ENCODE measurements at regions of chr4 and their contacts with region 1.

Region 1: DNA sequence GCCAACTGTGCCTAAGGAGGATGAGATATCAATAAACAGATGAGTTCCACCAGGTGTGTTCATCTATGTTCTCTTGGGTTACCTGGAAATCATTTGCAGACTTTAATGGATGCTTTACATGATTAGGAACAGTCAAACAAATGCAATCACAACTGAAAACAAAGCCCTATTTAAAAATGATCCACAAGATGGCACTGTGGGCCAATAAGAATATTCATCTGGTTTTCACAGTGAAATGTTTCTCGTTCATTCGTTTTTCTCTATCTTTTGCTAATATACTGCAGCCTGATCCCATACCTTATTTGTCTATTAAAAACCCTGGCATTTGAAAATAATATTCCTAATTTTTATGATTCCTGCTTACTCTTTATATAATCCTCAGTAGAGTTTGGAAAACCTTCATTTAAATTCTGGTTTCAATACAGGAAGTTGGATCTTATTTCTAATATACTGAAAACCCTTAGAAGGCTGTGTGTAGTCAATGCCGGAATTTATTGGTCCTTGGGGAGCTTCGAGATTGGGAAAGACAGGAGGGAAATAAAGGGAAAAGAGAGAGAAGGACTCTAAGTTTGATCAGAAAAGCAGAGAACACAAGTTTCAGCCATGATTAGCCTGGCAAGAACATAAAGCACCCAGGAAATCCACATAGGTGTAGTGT is 63.8 kb upstream of the TAPT1 start:
- DNase-seq: peak; percentile 7
- ATAC-seq: no peak
- H3K4me3 ChIP-seq: no peak overlapping the region
- H3K27ac ChIP-seq: no peak overlapping the region
- H3K4me1 ChIP-seq: no peaks in the 10 kb centered on the region
- H3K27me3 ChIP-seq: no peaks in the 10 kb centered on the region
- CTCF ChIP-seq: peak; percentile 67
- EP300 ChIP-seq: no peak
- POLR2A ChIP-seq: no peak
- RAD21 ChIP-seq: 0 out of 2 replicates have a peak, but pooled peaks have one; percentile 12

Region 2: GRCh38 chr4:16329125-16329796 is 39.2 kb after region 1 on chr4:
- CTCF ChIA-PET with region 1: no interaction called
- POLR2A ChIA-PET with region 1: no interaction called
- in situ Hi-C with region 1: no loop called
- intact Hi-C with region 1: no loop called
- DNase-seq: no peak
- ATAC-seq: no peak
- H3K4me3 ChIP-seq: no peak overlapping the region
- H3K27ac ChIP-seq: no peak overlapping the region
- H3K4me1 ChIP-seq: no peaks in the 10 kb centered on the region
- H3K27me3 ChIP-seq: no peaks in the 10 kb centered on the region
- CTCF ChIP-seq: no peak
- EP300 ChIP-seq: no peak
- POLR2A ChIP-seq: no peak
- RAD21 ChIP-seq: no peak

Region 3: GRCh38 chr4:16443504-16444088 is 153.6 kb after region 1 on chr4:
- CTCF ChIA-PET with region 1: interaction called, 16 read pairs
- POLR2A ChIA-PET with region 1: no interaction called
- in situ Hi-C with region 1: loop called (anchors 5 kb)
- intact Hi-C with region 1: loop called (anchors 1 kb)
- DNase-seq: peak; percentile 30
- ATAC-seq: peak; percentile 68
- H3K4me3 ChIP-seq: no peak overlapping the region
- H3K27ac ChIP-seq: no peak overlapping the region
- H3K4me1 ChIP-seq: no peaks in the 10 kb centered on the region
- H3K27me3 ChIP-seq: no peaks in the 10 kb centered on the region
- CTCF ChIP-seq: peak; percentile 66
- EP300 ChIP-seq: no peak
- POLR2A ChIP-seq: no peak
- RAD21 ChIP-seq: 0 out of 2 replicates have a peak, but pooled peaks have one; percentile 10

Region 4: GRCh38 chr4:16449406-16449805 is 159.4 kb after region 1 on chr4:
- CTCF ChIA-PET with region 1: interaction called, 16 read pairs
- POLR2A ChIA-PET with region 1: no interaction called
- in situ Hi-C with region 1: loop called (anchors 5 kb)
- intact Hi-C with region 1: no loop called
- DNase-seq: no peak
- ATAC-seq: no peak
- H3K4me3 ChIP-seq: no peak overlapping the region
- H3K27ac ChIP-seq: no peak overlapping the region
- H3K4me1 ChIP-seq: peaks cover 5% of the 10 kb centered on the region; the same call in 1 of the 2 replicates
- H3K27me3 ChIP-seq: no peaks in the 10 kb centered on the region
- CTCF ChIP-seq: no peak
- EP300 ChIP-seq: no peak
- POLR2A ChIP-seq: no peak
- RAD21 ChIP-seq: no peak

Region 5: DNA sequence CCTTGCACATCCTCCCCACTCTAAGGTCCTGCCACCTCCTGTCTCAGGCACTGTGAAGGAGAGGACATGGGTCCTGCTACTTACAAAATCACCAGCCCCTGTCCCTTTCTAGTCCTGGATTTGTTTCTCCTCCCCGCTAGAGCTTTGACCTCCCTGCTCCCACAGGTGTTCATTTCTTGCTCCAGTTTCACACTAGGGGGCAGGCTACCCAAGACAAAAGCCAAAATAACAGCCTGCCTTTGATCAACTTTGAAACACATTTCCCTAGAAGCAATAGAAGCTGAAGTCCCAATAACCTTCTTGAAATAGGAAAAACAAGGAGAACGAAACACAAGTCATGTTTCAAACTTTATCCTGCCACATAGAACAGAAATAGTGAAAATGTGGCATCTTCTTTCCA is 1057.4 kb after region 1 on chr4:
- CTCF ChIA-PET with region 1: no interaction called
- POLR2A ChIA-PET with region 1: no interaction called
- in situ Hi-C with region 1: loop called (anchors 25 kb)
- intact Hi-C with region 1: no loop called
- DNase-seq: peak; percentile 39
- ATAC-seq: peak; percentile 86
- H3K4me3 ChIP-seq: no peak overlapping the region
- H3K27ac ChIP-seq: no peak overlapping the region
- H3K4me1 ChIP-seq: no peaks in the 10 kb centered on the region
- H3K27me3 ChIP-seq: no peaks in the 10 kb centered on the region
- CTCF ChIP-seq: peak; percentile 76
- EP300 ChIP-seq: no peak
- POLR2A ChIP-seq: no peak
- RAD21 ChIP-seq: peak; percentile 34; the same call in 1 of the 2 replicates

Region 6: GRCh38 chr4:17468371-17469221 is 1178.6 kb after region 1 on chr4:
- CTCF ChIA-PET with region 1: no interaction called
- POLR2A ChIA-PET with region 1: no interaction called
- in situ Hi-C with region 1: loop called (anchors 25 kb)
- intact Hi-C with region 1: no loop called
- DNase-seq: peak; percentile 13
- ATAC-seq: no peak
- H3K4me3 ChIP-seq: no peak overlapping the region
- H3K27ac ChIP-seq: no peak overlapping the region
- H3K4me1 ChIP-seq: no peaks in the 10 kb centered on the region
- H3K27me3 ChIP-seq: no peaks in the 10 kb centered on the region
- CTCF ChIP-seq: 0 out of 2 replicates have a peak, but pooled peaks have one; percentile 16
- EP300 ChIP-seq: no peak
- POLR2A ChIP-seq: no peak
- RAD21 ChIP-seq: no peak